ENCODE measurements at regions of chr6 and their contacts with region 1.

Region 1: GRCh38 chr6:31769684-31770371 is 7.3 kb downstream of the VWA7 start:
- DNase-seq: peak; percentile 90
- H3K4me3 Mint-ChIP-seq: no peak overlapping the region
- H3K27ac Mint-ChIP-seq: peak overlapping the region; percentile 25
- H3K4me1 Mint-ChIP-seq: peaks cover 21% of the 10 kb centered on the region
- H3K27me3 Mint-ChIP-seq: no peaks in the 10 kb centered on the region

Region 2: DNA sequence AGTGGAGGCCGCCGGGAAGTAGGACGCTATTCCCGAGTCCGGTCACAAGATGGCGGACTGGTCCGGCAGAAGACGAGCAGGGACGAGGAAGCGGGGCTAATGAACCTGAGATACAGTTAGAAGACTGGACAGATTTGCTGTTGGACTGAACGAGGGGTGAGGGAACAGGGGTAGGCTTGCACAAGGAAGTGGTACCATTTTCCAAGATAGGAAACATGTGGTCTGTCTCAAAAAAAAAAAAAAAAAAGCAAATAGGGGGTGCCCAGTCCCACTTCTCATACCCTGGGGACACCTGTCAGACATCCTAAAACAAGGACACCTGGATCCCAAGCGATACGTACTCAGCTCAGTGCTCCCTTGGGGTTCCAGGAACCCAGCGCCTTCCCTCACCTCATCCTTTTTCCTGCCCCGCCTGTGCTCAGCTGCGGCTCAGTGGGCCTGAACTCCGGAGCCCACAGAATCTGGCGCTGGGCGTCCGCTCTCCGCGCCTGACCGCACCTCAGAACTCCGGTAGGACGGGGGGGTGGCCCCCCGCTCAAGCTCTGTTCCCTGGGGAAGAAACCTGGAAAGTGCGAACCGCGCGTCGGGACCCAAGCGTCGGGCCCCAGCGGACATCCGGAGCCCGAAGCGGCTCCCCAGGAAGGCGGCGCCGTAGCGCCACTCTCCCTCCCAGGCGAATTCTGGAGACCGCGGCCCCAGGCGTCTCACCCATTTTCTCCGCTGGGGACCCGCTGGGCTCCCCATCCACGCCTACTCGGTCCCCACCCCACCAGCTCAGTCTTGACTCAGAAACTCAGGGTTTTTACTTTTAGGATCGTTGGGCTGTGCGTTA is 88.8 kb before region 1 on chr6 and contains the start of gene LY6G5C:
- CTCF ChIA-PET with region 1: interaction called, 10 read pairs
- POLR2A ChIA-PET with region 1: interaction called, 3 read pairs
- intact Hi-C with region 1: no loop called
- DNase-seq: peak; percentile 82
- H3K4me3 Mint-ChIP-seq: peak within 1 kb of the TSS; percentile 76
- H3K27ac Mint-ChIP-seq: peak within 1 kb of the TSS; percentile 44
- H3K4me1 Mint-ChIP-seq: peaks cover 15% of the 10 kb centered on the region
- H3K27me3 Mint-ChIP-seq: no peaks in the 10 kb centered on the region
- total RNA-seq, gene LY6G5C: 1.4 to 1.8 TPM

Region 3: GRCh38 chr6:31692353-31692752 is 77.5 kb before region 1 on chr6:
- CTCF ChIA-PET with region 1: interaction called, 11 read pairs
- POLR2A ChIA-PET with region 1: no interaction called
- intact Hi-C with region 1: no loop called
- DNase-seq: no peak
- H3K4me3 Mint-ChIP-seq: no peak overlapping the region
- H3K27ac Mint-ChIP-seq: no peak overlapping the region
- H3K4me1 Mint-ChIP-seq: peaks cover 7% of the 10 kb centered on the region
- H3K27me3 Mint-ChIP-seq: no peaks in the 10 kb centered on the region

Region 4: DNA sequence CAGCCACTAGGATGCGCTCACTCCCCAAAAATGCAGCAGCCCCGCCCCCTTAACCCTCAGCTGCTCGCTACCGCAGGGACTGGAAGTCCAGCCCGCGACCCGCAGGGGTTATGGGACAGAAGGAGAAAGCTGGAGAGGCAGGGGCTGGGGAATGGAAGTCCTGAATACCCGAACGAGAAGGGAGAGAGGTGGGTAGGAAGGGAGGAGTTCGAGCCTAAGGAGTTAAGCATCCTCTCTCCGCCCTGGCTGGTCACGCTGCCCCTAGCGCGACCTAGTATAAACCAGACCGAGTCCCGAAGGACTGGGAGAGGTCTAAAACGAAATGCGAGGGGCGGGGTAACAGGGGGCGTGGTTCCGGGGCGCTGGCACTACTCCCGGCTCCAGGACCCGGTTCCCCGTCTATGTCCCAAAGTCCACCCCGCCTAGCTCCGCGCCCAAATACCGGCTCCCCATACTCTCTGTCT is 40.3 kb before region 1 on chr6:
- CTCF ChIA-PET with region 1: interaction called, 67 read pairs
- POLR2A ChIA-PET with region 1: no interaction called
- intact Hi-C with region 1: loop called (anchors 1 kb)
- DNase-seq: peak; percentile 84
- H3K4me3 Mint-ChIP-seq: peak overlapping the region; percentile 80
- H3K27ac Mint-ChIP-seq: peak overlapping the region; percentile 43
- H3K4me1 Mint-ChIP-seq: peaks cover 69% of the 10 kb centered on the region
- H3K27me3 Mint-ChIP-seq: no peaks in the 10 kb centered on the region

Region 5: DNA sequence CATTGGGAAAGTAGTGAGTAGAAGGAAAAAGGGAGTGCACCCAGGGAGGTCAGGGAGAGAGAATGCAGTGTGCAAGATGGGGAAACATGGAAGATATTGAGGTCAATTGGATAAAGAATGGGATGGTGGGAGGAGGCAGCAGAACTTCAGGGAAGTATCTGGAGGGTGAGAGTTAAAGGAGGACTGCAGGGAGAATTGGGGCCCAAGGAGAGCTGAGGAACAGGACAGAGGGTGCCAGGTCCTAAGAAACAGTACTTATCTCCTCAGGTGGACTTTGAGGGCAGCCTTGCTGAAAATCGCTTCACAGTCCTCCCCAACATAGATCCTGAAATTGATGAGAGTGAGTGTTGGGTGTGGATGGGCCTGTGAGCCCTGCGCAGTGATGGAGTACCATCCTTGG is 11.5 kb before region 1 on chr6:
- CTCF ChIA-PET with region 1: interaction called, 13 read pairs
- POLR2A ChIA-PET with region 1: no interaction called
- intact Hi-C with region 1: no loop called
- DNase-seq: no peak
- H3K4me3 Mint-ChIP-seq: no peak overlapping the region
- H3K27ac Mint-ChIP-seq: no peak overlapping the region
- H3K4me1 Mint-ChIP-seq: no peaks in the 10 kb centered on the region
- H3K27me3 Mint-ChIP-seq: no peaks in the 10 kb centered on the region

Region 6: DNA sequence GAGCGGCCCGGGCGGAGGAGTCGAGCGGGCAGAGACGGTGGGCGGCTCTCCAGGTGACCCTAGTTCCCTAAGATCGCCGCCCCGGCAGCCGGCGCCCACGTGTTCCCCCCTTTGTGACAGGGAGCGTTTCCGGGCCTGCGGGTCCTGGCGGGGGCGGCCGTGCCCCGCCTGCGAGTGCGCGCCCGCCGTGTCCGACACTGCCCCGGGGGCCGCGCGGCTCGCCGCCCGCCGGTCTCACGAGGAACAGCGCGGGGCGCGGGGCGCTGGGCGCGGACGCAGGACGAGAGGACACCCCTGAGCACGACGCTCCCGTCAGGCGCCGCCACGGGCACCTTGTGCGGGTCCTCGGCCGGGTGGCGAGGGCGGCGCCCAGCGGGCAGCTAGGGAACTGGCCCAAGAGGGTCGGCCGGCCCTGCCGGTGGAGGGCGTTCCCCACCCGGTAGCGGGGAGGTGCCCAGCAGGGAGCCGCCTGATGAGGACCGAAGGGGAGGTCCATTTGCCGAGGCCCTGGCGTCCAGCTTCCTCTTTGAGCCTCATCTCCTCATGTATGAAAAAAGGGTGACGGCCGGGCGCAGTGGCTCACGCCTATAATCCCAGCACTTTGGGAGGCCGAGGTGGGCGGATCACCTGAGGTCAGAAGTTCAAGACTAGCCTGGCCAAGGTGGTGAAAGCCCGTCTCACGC is 25.9 kb after region 1 on chr6 and contains the start of gene VARS1:
- CTCF ChIA-PET with region 1: interaction called, 18 read pairs
- POLR2A ChIA-PET with region 1: interaction called, 4 read pairs
- intact Hi-C with region 1: no loop called
- DNase-seq: peak; percentile 91
- H3K4me3 Mint-ChIP-seq: peak within 1 kb of the TSS; percentile 98
- H3K27ac Mint-ChIP-seq: peak within 1 kb of the TSS; percentile 91
- H3K4me1 Mint-ChIP-seq: peaks cover 39% of the 10 kb centered on the region
- H3K27me3 Mint-ChIP-seq: no peaks in the 10 kb centered on the region
- total RNA-seq, gene VARS1: 141 to 153 TPM

Region 7: DNA sequence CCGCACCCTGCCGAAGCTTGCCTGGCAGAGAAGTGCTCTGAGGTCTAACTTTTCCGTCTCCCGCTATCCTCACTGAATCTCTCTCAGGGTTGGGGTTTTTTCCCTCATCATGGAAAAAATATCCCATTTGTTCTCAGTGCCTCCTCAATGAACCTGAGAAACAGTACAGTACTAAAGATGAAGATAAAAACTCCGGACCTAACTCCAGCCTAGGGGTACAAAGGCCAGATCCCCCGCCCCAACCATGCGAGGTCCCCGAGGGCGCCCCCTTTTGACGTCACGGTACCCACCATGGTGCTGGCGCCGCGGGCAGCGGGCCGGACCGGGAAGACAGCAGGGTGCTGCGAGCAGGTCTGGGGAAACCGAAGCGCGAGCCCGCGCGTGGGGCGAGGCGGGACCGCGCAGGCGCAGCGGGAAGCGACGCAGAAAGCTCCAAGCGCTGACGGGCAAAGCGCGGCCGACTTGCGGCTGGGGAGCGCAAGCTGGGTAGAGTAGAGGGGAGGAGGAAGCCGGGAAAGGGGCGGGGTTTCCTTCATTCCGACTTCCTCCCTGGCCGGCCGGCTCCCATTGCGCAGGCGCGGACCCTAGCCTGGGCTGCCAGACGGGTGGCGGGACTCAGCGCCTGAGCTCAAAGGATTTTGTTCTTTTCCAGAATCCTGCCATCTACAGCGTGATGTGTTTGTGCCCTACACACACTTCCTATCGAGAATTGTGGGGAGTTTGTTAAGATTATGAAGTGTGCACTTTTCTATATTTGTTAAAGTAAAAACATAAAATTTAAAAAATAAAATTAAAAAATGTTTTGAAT is 36.8 kb after region 1 on chr6 and contains the start of gene LSM2:
- CTCF ChIA-PET with region 1: interaction called, 13 read pairs
- POLR2A ChIA-PET with region 1: interaction called, 3 read pairs
- intact Hi-C with region 1: no loop called
- DNase-seq: peak; percentile 98
- H3K4me3 Mint-ChIP-seq: peak within 1 kb of the TSS; percentile 86
- H3K27ac Mint-ChIP-seq: peak within 1 kb of the TSS; percentile 87
- H3K4me1 Mint-ChIP-seq: peaks cover 30% of the 10 kb centered on the region
- H3K27me3 Mint-ChIP-seq: no peaks in the 10 kb centered on the region
- total RNA-seq, gene LSM2: 142 to 143 TPM

Measured in activated CD4-positive, alpha-beta memory T cell treated with anti-CD3 and anti-CD28 coated beads for 36 hours (primary cell).